Activated B cell treated with CpG ODN at 0.5 μM for 24 hours (primary cell): ENCODE measurements at regions of chr15 and their contacts with region 1.

Region 1: DNA sequence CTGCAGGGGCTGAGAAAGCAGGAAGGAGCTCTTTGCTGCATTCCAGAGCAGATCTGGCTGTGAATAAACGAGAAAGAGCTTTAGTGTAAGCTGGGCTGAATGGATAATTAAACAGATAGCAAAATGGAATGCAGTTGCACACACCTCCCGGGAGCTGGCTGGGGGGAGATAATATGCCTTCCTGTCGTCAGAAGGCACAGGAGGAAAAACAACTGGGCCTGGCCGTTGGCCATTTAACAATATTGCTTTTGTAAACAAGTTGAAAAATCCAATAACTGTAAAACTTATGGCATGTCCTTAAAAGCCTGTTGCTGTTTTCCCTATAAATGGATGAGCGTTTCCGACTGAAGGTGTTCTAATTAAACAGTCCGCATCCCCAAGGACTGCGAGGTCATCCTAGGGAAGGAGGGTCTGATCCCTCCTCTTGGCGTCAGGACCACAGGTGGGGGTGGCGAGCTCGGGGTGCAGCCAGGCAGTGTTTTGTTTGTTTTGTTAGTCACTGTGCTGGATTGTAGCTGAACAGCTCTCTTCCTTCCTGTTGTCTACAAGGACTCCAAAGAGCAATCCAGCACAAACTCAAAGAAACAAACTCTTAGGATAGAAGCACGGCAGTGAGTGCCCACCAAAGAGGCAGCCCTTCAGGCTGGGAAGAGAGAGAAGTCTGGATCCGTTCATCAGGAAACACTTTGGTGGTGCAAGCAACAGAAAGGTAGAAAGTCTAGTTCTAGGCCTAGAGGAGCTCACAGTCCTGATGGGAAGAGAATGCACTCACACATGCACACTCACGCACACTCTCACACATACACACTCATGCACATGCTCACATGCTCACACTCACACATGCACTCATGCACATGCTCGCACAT is 133.4 kb upstream of the SMAD3 start:
- DNase-seq: no peak
- ATAC-seq: no peak
- H3K4me3 Mint-ChIP-seq: no peak overlapping the region
- H3K27ac Mint-ChIP-seq: no peak overlapping the region
- H3K4me1 Mint-ChIP-seq: no peaks in the 10 kb centered on the region
- H3K27me3 Mint-ChIP-seq: peaks cover 13% of the 10 kb centered on the region
- CTCF ChIP-seq: no peak

Region 2: DNA sequence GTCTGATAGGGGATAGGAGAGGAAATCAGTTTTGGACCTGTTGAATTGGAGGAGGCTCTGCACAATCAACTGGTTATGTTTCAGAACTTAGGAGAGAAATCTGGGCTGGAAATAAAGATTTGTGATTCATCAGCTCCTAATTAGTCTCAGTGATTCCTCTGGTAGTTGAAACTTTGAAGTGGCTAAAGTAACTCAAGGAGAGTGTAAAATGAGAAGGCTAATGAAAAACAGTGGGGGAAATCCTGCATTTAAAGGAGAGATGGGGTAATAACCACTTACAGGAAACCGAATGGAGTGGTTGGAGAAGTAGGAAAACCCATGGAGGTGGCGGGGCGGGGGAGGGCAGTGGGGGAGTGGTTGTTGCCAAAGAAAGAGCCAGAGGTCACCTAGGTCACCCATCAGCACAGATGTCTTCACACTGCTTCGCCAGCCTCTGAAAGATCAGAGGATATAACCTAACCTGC is 643.1 kb after region 1 on chr15:
- CTCF ChIA-PET with region 1: no interaction called
- POLR2A ChIA-PET with region 1: no interaction called
- intact Hi-C with region 1: loop called (anchors 10 kb)
- DNase-seq: no peak
- ATAC-seq: no peak
- H3K4me3 Mint-ChIP-seq: no peak overlapping the region
- H3K27ac Mint-ChIP-seq: no peak overlapping the region
- H3K4me1 Mint-ChIP-seq: peaks cover 3% of the 10 kb centered on the region
- H3K27me3 Mint-ChIP-seq: no peaks in the 10 kb centered on the region
- CTCF ChIP-seq: no peak